ENCODE measurements at regions of chr2 and their contacts with region 1.

Region 1: DNA sequence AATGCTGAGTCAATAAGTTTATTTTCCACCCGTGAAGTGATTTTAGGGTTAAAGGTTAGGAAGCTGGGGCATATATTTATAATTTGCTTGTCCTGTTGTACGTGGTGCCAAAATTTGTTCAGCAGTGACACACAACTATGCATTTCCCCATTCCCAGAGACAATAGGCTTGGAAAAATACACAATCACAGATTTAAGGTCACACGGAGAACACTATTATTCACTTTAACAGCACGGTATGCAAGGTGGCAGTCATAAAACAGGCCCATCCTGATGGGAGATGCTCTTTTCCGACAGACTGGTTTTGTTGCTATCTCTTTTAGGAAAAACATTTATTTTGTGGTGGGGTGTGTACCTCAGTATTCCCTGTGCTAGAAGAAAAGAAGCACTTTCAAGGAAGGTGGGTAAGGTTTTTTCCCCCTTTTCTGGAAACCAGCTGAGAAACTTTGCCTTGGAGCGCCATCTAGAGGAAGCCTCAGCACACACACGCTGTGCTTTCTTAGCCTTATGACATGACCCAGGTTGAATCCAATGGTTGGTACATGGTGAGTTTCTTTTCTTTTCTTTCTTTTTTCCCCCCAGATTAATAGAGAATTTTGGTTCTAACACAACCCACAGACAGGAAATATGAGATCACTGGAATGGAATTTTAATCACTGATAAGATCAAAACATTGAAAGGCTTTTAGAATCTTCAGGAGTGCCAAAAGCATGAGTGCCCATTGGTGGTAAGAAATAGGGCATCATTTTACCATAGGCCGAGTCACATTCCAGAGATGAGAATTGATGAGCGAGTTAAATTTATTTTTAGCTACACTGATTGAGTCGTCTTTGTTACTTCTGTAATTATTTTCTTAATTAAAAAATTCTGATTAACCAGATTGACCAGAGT is 332.1 kb downstream of the AGPS start:
- DNase-seq: peak; percentile 52

Region 2: DNA sequence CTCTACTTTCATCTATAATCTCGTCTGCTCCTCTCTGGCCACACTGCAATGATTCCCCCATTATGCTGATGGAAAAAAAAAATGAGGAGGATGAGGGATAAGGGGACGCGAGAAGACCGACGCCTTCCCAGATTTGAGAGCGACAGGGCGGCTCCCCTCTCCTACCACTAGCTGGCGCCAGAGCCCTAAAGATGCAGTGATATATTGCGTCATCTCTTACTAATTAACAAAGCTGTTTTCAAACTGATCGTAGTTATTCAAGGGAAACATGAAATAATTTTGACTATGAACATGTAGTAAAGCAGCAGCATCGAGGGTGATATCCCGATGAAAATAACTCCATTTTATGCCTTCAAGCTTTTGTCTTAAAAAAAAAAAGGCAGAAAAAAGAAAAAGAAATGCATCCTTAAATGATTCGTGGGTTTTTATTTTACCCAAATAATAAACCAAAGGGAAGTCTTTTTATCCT is 560.0 kb before region 1 on chr2:
- in situ Hi-C with region 1: loop called (anchors 25 kb)
- DNase-seq: peak; percentile 86

Region 3: GRCh38 chr2:177332041-177332991 is 392.3 kb before region 1 on chr2:
- in situ Hi-C with region 1: loop called (anchors 25 kb)
- DNase-seq: peak; percentile 91